ENCODE measurements at regions of chr7 and their contacts with region 1.

Region 1: GRCh38 chr7:149090397-149091195 is at the start of gene ZNF786:
- DNase-seq: peak; percentile 86 to 97 (median 93)
- ATAC-seq: peak; percentile 85
- H3K4me3 ChIP-seq: peak within 1 kb of the TSS; percentile 83 to 98
- H3K4me3 Mint-ChIP-seq: peak within 1 kb of the TSS; percentile 99
- H3K27ac ChIP-seq: peak within 1 kb of the TSS; percentile 90 to 95
- H3K27ac Mint-ChIP-seq: peak within 1 kb of the TSS; percentile 100
- H3K4me1 ChIP-seq: peaks cover 31% of the 10 kb centered on the region
- H3K4me1 Mint-ChIP-seq: peaks cover 27% of the 10 kb centered on the region
- H3K27me3 ChIP-seq: no peaks in the 10 kb centered on the region
- H3K27me3 Mint-ChIP-seq: no peaks in the 10 kb centered on the region
- CTCF ChIP-seq: peak; percentile 90
- total RNA-seq, gene ZNF786: 4.7 to 5.7 TPM

Region 2: DNA sequence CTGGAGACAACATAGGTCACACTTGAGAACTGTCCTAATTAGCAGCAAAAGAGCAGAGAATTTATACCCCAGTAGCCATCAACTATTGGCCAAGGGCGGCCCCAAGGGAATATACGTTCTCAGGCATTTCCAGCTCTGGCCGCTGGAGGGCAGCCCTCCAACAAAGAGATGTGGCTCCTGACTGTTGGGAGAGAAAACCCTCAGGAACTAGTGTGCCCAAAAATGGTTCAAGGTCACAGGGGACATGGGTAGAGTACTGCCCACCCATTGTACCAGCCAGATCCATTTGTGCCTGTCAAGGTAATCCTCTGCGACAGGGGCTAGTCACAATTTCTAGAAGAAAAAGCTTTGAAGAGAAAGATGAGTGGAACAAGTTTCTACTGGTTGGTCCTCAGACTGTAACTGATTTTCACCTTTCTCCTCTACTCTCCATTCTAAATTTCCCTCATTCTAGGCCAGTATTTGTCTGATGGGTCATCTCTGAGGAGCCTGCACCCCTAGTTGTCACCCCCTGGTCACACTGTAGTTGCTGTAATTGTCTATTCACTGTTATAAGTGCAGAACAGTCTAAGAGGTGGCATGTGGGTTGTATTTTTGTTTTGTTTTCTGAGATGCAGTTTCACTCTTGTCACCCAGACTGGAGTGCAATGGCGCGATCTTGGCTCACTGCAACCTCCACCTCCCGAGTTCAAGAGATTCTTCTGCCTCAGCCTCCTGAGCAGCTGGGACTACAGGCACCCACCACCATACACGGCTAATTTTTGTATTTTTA is 514.8 kb before region 1 on chr7:
- CTCF ChIA-PET with region 1: no interaction called
- POLR2A ChIA-PET with region 1: no interaction called
- intact Hi-C with region 1: loop called in 1 of 2 experiments (anchors 1 kb)
- DNase-seq: peak; percentile 31 to 83 (median 71)
- ATAC-seq: peak; percentile 86
- H3K4me3 ChIP-seq: no peak overlapping the region
- H3K4me3 Mint-ChIP-seq: no peak overlapping the region
- H3K27ac ChIP-seq: no peak overlapping the region
- H3K27ac Mint-ChIP-seq: no peak overlapping the region
- H3K4me1 ChIP-seq: peaks cover 4% of the 10 kb centered on the region
- H3K4me1 Mint-ChIP-seq: peaks cover 2% of the 10 kb centered on the region
- H3K27me3 ChIP-seq: no peaks in the 10 kb centered on the region
- H3K27me3 Mint-ChIP-seq: peaks cover 2% of the 10 kb centered on the region
- CTCF ChIP-seq: peak; percentile 86

Region 3: DNA sequence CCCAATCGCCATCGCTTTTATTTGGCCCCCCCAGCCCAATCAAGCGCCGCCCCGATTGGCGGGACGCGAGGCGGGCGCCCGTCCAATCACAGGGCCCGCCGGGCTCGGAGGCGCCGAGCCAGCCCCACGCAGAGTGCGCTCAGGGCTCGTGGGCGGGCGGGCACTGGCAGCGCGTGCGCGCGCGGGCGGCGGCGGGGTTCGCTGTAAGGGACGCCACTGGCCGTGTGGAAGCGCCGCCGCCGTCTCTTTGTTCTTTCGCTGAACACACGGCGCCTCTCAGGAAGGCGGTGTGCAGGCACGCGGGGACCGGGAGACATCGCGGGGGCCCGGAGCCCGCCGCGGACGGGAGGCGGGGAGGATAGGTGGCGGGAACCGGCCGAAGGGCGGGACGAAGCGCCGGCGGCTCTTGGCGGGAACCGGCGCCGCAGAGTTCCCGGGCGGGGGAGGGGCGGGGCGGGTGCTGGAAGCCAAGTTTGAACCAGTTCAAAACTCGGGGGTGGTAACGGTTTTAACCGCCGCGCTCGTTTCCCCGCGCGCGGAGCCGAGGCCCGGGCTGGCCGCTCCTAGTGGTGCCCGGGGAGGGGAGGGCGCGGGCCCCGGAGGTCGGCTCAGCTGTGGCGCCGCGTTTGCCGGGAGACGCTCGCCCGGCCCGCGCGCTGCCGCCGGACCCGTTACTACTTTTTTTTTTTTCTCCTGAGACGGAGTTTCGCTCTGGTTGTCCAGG is 206.1 kb before region 1 on chr7:
- CTCF ChIA-PET with region 1: no interaction called
- POLR2A ChIA-PET with region 1: no interaction called
- intact Hi-C with region 1: loop called (anchors 2 to 10 kb)
- DNase-seq: peak; percentile 87 to 97 (median 93)
- ATAC-seq: peak; percentile 89
- H3K4me3 ChIP-seq: peak overlapping the region; percentile 54 to 61
- H3K4me3 Mint-ChIP-seq: peak overlapping the region; percentile 87
- H3K27ac ChIP-seq: peak overlapping the region; percentile 47 to 67
- H3K27ac Mint-ChIP-seq: peak overlapping the region; percentile 89
- H3K4me1 ChIP-seq: peaks cover 8% of the 10 kb centered on the region
- H3K4me1 Mint-ChIP-seq: peaks cover 24% of the 10 kb centered on the region
- H3K27me3 ChIP-seq: peaks cover 0 to 4% of the 10 kb centered on the region in 2 experiments
- H3K27me3 Mint-ChIP-seq: no peaks in the 10 kb centered on the region
- CTCF ChIP-seq: no peak

Region 4: GRCh38 chr7:148994601-148995000 is 96.0 kb before region 1 on chr7:
- CTCF ChIA-PET with region 1: no interaction called
- POLR2A ChIA-PET with region 1: no interaction called
- intact Hi-C with region 1: no loop called
- DNase-seq: no peak
- ATAC-seq: no peak
- H3K4me3 ChIP-seq: no peak overlapping the region
- H3K4me3 Mint-ChIP-seq: no peak overlapping the region
- H3K27ac ChIP-seq: no peak overlapping the region
- H3K27ac Mint-ChIP-seq: no peak overlapping the region
- H3K4me1 ChIP-seq: no peaks in the 10 kb centered on the region
- H3K4me1 Mint-ChIP-seq: no peaks in the 10 kb centered on the region
- H3K27me3 ChIP-seq: no peaks in the 10 kb centered on the region
- H3K27me3 Mint-ChIP-seq: no peaks in the 10 kb centered on the region
- CTCF ChIP-seq: no peak

Region 5: DNA sequence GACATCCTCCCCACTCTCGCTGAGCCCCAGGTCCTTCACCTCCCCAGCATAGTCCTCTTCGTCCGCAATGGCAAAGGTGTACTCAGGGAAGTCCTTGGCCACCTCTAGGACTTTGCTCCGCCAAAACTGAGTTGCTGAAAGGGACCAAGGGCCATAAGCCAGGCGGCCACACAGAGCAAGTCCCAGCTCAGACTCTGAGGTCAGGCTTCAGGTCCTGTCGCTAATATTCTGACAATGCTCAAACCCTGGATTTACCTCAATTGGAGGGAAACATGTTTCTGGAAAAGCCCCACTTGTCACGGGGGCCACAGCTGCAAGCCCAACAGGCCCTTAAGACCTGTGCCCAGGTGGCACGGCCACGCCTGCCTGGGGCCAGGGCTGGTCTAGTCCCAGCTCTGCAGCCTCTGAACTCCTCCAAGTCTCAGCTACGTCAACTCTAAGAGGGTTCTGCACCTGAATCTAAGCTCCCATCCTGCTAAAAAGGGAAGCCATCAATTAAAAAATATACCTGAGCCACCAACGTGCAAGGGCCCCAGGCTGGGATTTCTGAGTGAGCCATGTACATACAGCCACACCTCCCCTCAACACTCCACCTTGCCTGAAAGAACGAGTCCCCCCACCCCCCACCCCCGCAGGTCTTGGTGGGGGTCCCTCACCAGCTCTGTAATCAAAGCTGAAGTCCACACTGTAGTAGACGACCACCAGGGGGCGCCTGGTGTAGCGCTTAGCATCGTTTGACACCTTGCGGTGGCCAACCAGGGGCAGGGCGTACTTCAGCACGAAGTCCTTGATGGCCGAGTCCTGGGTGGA is 85.2 kb before region 1 on chr7:
- CTCF ChIA-PET with region 1: interaction called, 27 read pairs
- POLR2A ChIA-PET with region 1: interaction called, 9 read pairs
- intact Hi-C with region 1: loop called (anchors 1 kb)
- DNase-seq: peak; percentile 61 to 91 (median 87)
- ATAC-seq: peak; percentile 92
- H3K4me3 ChIP-seq: no peak overlapping the region
- H3K4me3 Mint-ChIP-seq: no peak overlapping the region
- H3K27ac ChIP-seq: no peak overlapping the region
- H3K27ac Mint-ChIP-seq: no peak overlapping the region
- H3K4me1 ChIP-seq: peaks cover 4% of the 10 kb centered on the region
- H3K4me1 Mint-ChIP-seq: peaks cover 4% of the 10 kb centered on the region
- H3K27me3 ChIP-seq: no peaks in the 10 kb centered on the region
- H3K27me3 Mint-ChIP-seq: no peaks in the 10 kb centered on the region
- CTCF ChIP-seq: peak; percentile 75

Region 6: GRCh38 chr7:149071641-149072437 is 18.8 kb before region 1 on chr7:
- CTCF ChIA-PET with region 1: no interaction called
- POLR2A ChIA-PET with region 1: no interaction called
- intact Hi-C with region 1: loop called (anchors 1 kb)
- DNase-seq: peak; percentile 19 to 74 (median 49)
- ATAC-seq: peak; percentile 73
- H3K4me3 ChIP-seq: no peak overlapping the region
- H3K4me3 Mint-ChIP-seq: no peak overlapping the region
- H3K27ac ChIP-seq: peak overlapping the region; percentile 42 to 63
- H3K27ac Mint-ChIP-seq: peak overlapping the region; percentile 77
- H3K4me1 ChIP-seq: no peaks in the 10 kb centered on the region
- H3K4me1 Mint-ChIP-seq: peaks cover 3% of the 10 kb centered on the region
- H3K27me3 ChIP-seq: no peaks in the 10 kb centered on the region
- H3K27me3 Mint-ChIP-seq: no peaks in the 10 kb centered on the region
- CTCF ChIP-seq: no peak